Breast epithelium (tissue), 4 donors: ENCODE measurements at regions of chr3 and their contacts with region 1.

Region 1: GRCh38 chr3:25967385-25967784 is 177.5 kb downstream of the OXSM start:
- DNase-seq: no peak
- H3K4me3 ChIP-seq: no peak overlapping the region
- H3K27ac ChIP-seq: no peak overlapping the region
- H3K4me1 ChIP-seq: no peaks in the 10 kb centered on the region
- H3K27me3 ChIP-seq: no peaks in the 10 kb centered on the region
- CTCF ChIP-seq: no peak
- POLR2A ChIP-seq: no peak

Region 2: DNA sequence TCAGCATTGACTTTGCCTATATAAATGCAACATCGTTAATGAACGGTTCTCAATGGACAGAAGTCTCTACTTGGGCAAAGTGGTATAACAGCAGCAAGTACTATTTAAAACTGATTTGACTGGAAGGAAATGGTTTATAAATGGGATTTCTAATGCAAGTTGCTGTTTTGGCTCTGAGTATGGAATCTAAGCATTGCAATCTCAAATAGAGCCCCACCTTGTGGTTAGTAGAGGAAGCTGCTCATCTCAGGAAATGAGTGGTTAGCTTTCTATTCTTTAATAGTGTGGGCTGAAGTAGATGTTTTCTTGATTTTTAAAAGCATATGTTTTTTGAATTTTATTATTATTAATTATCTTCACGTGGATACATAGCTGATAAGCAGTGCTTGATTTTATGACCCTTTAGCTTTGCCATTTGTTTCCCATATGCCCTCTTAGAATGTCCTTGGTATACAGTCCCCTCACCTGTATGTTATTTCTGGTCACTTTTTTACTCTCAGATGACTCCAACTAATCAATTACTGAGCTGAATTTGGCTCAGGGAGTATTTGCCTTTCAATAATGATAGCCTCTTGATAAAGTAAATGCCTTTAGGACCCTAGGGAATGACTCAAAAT is 110.4 kb before region 1 on chr3:
- intact Hi-C with region 1: no loop called
- DNase-seq: no peak
- H3K4me3 ChIP-seq: no peak overlapping the region
- H3K27ac ChIP-seq: no peak overlapping the region
- H3K4me1 ChIP-seq: no peaks in the 10 kb centered on the region
- H3K27me3 ChIP-seq: no peaks in the 10 kb centered on the region
- CTCF ChIP-seq: peak in 2 of 3 donors; percentile 50
- POLR2A ChIP-seq: no peak

Region 3: DNA sequence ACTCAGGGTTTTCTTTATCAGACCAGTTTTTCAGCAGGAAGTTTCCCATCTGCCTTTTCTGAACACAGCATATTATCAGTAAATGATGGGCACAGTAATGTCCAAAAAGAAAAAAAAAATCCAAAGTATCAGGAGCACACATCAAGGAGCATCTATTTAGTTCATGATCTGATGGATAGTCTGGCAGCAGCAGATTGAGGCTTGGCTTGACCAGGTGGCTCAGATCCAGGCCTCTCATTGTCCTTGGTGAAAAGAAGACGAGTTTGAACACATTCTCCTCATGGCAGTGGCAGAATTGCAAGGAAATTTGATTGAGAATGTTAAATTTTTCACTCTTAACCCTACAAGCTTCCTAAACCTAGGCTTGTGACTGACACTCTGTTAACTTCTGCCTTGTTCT is 15.4 kb after region 1 on chr3:
- intact Hi-C with region 1: loop called (anchors 1 kb)
- DNase-seq: no peak
- H3K4me3 ChIP-seq: no peak overlapping the region
- H3K27ac ChIP-seq: no peak overlapping the region
- H3K4me1 ChIP-seq: no peaks in the 10 kb centered on the region
- H3K27me3 ChIP-seq: no peaks in the 10 kb centered on the region
- CTCF ChIP-seq: no peak
- POLR2A ChIP-seq: no peak

Region 4: GRCh38 chr3:26799679-26800317 is 832.4 kb after region 1 on chr3:
- intact Hi-C with region 1: no loop called
- DNase-seq: no peak
- H3K4me3 ChIP-seq: no peak overlapping the region
- H3K27ac ChIP-seq: no peak overlapping the region
- H3K4me1 ChIP-seq: no peaks in the 10 kb centered on the region
- H3K27me3 ChIP-seq: no peaks in the 10 kb centered on the region
- CTCF ChIP-seq: no peak
- POLR2A ChIP-seq: no peak

Region 5: GRCh38 chr3:27467545-27467944 is 1500.2 kb after region 1 on chr3:
- intact Hi-C with region 1: no loop called
- DNase-seq: no peak
- H3K4me3 ChIP-seq: no peak overlapping the region
- H3K27ac ChIP-seq: peak overlapping the region in 1 of 2 donors; percentile 11
- H3K4me1 ChIP-seq: no peaks in the 10 kb centered on the region
- H3K27me3 ChIP-seq: no peaks in the 10 kb centered on the region
- CTCF ChIP-seq: peak in 2 of 3 donors; percentile 46 to 47
- POLR2A ChIP-seq: no peak